A673 (cell line): ENCODE measurements at regions of chr1 and their contacts with region 1.

Region 1: GRCh38 chr1:210001751-210002150 is 63.7 kb downstream of the SYT14 start:
- DNase-seq: no peak
- H3K4me3 ChIP-seq: no peak overlapping the region
- H3K27ac ChIP-seq: no peak overlapping the region
- H3K4me1 ChIP-seq: peaks cover 30% of the 10 kb centered on the region
- H3K27me3 ChIP-seq: no peaks in the 10 kb centered on the region
- CTCF ChIP-seq: no peak

Region 2: GRCh38 chr1:210123924-210124589 is 122.3 kb after region 1 on chr1:
- CTCF ChIA-PET with region 1: no interaction called
- POLR2A ChIA-PET with region 1: interaction called, 4 read pairs
- intact Hi-C with region 1: loop called (anchors 5 kb)
- DNase-seq: peak; percentile 98
- H3K4me3 ChIP-seq: no peak overlapping the region
- H3K27ac ChIP-seq: peak overlapping the region; percentile 79
- H3K4me1 ChIP-seq: peaks cover 38% of the 10 kb centered on the region
- H3K27me3 ChIP-seq: no peaks in the 10 kb centered on the region
- CTCF ChIP-seq: no peak

Region 3: DNA sequence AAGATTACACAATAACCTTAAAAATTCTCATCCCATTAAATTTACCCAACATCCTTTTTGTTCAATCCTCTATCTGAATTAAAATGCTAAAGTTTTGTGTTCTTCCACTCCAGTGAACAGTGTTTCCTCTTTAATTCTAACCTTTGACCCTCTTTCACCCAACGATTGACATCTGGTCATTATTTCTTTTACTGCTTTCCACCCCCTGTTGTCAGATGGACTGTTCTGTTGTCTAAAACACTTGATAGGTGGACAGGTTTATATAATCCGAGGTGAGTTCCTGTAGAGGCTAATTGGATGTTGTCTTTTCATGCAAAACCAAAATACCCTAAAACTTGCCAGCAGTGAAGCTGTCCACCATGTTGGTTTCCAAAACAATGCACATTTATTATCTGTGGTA is 157.5 kb after region 1 on chr1:
- CTCF ChIA-PET with region 1: no interaction called
- POLR2A ChIA-PET with region 1: interaction called, 18 read pairs
- intact Hi-C with region 1: no loop called
- DNase-seq: no peak
- H3K4me3 ChIP-seq: no peak overlapping the region
- H3K27ac ChIP-seq: no peak overlapping the region
- H3K4me1 ChIP-seq: peaks cover 12% of the 10 kb centered on the region
- H3K27me3 ChIP-seq: no peaks in the 10 kb centered on the region
- CTCF ChIP-seq: no peak